ENCODE measurements at regions of chr1 and their contacts with region 1.

Region 1: GRCh38 chr1:107748531-107748930 is 216.4 kb downstream of the VAV3 start:
- DNase-seq: peak; percentile 9
- H3K4me3 ChIP-seq: no peak overlapping the region
- CTCF ChIP-seq: peak; percentile 39

Region 2: DNA sequence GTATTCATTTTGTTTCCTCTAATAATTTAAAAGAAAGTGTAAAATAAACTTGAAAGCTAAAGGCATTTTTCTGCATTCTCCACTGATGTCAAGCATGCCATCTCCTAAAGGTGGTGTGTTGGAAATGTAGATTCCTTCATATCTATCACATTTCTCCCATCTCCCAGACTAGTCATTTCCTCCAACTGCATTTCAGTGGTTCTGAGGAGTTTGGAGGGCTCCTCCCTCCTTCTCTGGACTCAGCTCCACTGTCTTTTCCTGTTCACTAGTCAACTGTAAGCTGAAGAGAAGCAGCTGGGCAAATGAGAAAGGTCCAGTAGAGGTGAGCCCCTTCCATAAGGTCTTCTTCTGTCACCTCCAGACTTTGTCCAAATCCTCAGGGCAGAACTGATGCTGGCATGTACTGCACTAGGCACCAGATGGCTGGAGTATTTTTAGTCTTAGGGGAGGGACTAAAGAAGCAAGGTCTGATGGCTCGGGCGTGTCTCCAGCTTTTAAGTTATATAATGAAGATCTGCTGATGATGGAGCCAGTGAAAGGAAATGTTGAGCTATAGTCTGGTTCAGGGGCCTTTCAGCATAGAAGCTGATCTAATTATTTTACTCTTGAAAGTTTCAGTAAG is 421.6 kb before region 1 on chr1:
- in situ Hi-C with region 1: loop called (anchors 25 kb)
- DNase-seq: no peak
- H3K4me3 ChIP-seq: no peak overlapping the region
- CTCF ChIP-seq: no peak

Region 3: GRCh38 chr1:107787299-107787698 is 38.8 kb after region 1 on chr1:
- in situ Hi-C with region 1: no loop called
- DNase-seq: no peak
- H3K4me3 ChIP-seq: no peak overlapping the region
- CTCF ChIP-seq: peak; percentile 11